ENCODE measurements at regions of chr11 and their contacts with region 1.

Region 1: DNA sequence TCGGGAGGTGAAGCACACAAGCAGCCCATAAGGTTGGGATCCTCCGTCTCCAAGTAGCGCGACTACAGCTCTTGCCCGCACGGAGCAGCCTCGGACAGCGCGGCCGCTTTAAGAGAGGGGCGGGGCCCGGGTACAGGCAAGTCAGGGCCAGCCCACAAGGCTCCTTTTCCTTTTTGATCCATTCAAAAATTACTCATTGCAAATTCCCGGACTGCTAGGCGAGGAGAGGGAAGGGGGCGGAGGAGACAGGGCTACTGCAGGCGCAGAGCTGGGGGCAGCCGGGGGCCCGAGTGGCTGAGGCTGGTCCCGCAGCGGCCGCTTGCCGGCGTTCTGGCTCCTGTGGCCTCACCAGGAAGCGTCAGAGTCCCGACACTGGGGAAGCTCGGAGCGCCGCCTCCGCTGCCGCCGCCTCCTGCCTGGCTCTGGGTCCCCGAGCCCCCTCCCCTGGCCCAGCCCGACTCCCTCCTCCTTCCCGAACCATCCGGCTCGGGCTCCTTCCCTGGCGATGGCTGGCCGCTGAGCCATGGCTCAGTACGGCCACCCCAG is at the start of gene UBASH3B:
- DNase-seq: peak; percentile 77
- ATAC-seq: peak; percentile 74
- H3K4me3 Mint-ChIP-seq: peak within 1 kb of the TSS; percentile 91
- H3K27ac Mint-ChIP-seq: peak within 1 kb of the TSS; percentile 79
- H3K4me1 Mint-ChIP-seq: peaks cover 40% of the 10 kb centered on the region
- H3K27me3 Mint-ChIP-seq: peaks cover 6% of the 10 kb centered on the region
- total RNA-seq, gene UBASH3B: 16.2 to 20.1 TPM

Region 2: DNA sequence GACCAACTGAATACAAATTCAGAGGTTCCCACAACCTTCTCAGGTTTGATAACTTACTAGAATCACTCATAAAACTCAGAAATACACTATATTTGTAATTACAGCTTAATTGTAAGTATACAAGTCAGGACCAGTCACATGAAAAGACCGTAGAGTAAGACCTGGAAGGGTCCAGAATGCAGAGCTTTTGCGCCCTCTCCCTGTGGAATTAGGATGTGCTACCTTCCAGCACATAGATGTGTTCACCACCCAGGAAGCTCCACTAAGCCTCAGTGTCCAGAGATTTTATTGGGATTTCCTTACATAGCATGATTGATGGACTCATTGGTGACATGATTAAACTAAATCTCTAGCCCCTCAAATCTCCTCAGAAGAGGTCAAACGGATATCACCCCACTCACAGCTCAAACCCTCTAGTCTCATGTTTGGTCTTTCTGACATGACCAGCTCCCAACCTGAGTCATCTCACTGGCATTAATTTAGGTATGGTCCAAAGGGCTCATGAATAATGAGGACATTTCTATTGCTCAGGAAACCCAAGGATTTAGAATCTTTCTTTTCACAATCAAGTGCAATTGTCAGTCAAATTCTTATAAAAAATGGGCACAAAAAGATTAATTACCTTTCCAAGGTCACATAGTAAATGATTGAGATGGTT is 77.3 kb before region 1 on chr11:
- CTCF ChIA-PET with region 1: interaction called, 3 read pairs
- POLR2A ChIA-PET with region 1: no interaction called
- intact Hi-C with region 1: loop called in 1 of 2 experiments (anchors 1 kb)
- DNase-seq: peak; percentile 16
- ATAC-seq: no peak
- H3K4me3 Mint-ChIP-seq: no peak overlapping the region
- H3K27ac Mint-ChIP-seq: no peak overlapping the region
- H3K4me1 Mint-ChIP-seq: peaks cover 8% of the 10 kb centered on the region
- H3K27me3 Mint-ChIP-seq: no peaks in the 10 kb centered on the region

Region 3: GRCh38 chr11:122673701-122674100 is 18.1 kb after region 1 on chr11:
- CTCF ChIA-PET with region 1: interaction called, 12 read pairs
- POLR2A ChIA-PET with region 1: interaction called, 8 read pairs
- intact Hi-C with region 1: loop called in 1 of 2 experiments (anchors 2 kb)
- DNase-seq: no peak
- ATAC-seq: no peak
- H3K4me3 Mint-ChIP-seq: no peak overlapping the region
- H3K27ac Mint-ChIP-seq: no peak overlapping the region
- H3K4me1 Mint-ChIP-seq: peaks cover 73% of the 10 kb centered on the region
- H3K27me3 Mint-ChIP-seq: no peaks in the 10 kb centered on the region

Region 4: GRCh38 chr11:122690801-122691548 is 35.4 kb after region 1 on chr11:
- CTCF ChIA-PET with region 1: interaction called, 7 read pairs
- POLR2A ChIA-PET with region 1: interaction called, 5 read pairs
- intact Hi-C with region 1: loop called in 1 of 2 experiments (anchors 1 kb)
- DNase-seq: peak; percentile 35
- ATAC-seq: peak; percentile 16
- H3K4me3 Mint-ChIP-seq: peak overlapping the region; percentile 46
- H3K27ac Mint-ChIP-seq: peak overlapping the region; percentile 80
- H3K4me1 Mint-ChIP-seq: peaks cover 79% of the 10 kb centered on the region
- H3K27me3 Mint-ChIP-seq: no peaks in the 10 kb centered on the region

Region 5: GRCh38 chr11:122697636-122698167 is 42.1 kb after region 1 on chr11:
- CTCF ChIA-PET with region 1: interaction called, 7 read pairs
- POLR2A ChIA-PET with region 1: interaction called, 4 read pairs
- intact Hi-C with region 1: loop called (anchors 1 kb)
- DNase-seq: peak; percentile 61
- ATAC-seq: peak; percentile 79
- H3K4me3 Mint-ChIP-seq: peak overlapping the region; percentile 17
- H3K27ac Mint-ChIP-seq: peak overlapping the region; percentile 82
- H3K4me1 Mint-ChIP-seq: peaks cover 82% of the 10 kb centered on the region
- H3K27me3 Mint-ChIP-seq: no peaks in the 10 kb centered on the region

Region 6: DNA sequence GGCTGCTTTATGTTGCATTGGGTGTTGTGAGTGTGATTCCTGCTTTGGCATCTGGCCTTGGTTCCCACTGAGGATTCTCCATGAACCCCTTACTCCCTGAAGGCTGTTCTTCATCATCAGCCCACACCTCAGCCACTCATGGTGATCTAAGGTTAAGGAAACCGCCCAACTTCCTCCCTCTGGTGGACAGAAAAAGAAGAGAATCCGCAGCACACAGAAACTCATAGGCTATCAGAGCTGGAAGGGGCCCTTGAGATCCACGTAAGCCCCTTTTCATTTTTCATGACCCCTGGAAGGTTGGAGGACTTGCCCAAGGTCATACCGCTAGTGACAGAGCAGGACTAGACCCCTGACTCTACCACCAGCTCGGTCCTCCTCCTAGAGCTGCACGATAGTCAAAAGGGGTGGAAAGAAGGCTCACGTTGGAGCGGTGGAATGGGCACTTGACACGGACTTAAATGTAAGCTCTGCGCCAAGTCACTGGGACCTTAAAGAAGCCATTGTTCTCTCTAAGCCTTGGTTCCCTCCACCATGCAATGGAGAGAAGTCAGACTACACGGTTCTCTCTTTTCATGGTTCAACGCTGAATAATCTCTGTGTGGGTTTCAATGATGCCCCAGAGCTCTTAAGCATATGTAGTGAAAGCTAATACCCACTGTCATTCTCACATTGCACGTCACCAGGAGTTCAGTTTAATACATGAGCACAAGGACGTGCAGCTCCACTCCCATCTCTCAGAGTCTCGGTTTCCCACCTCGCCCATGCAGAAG is 99.1 kb after region 1 on chr11:
- CTCF ChIA-PET with region 1: interaction called, 22 read pairs
- POLR2A ChIA-PET with region 1: no interaction called
- intact Hi-C with region 1: loop called (anchors 2 kb)
- DNase-seq: peak; percentile 52
- ATAC-seq: peak; percentile 47
- H3K4me3 Mint-ChIP-seq: no peak overlapping the region
- H3K27ac Mint-ChIP-seq: no peak overlapping the region
- H3K4me1 Mint-ChIP-seq: peaks cover 60% of the 10 kb centered on the region
- H3K27me3 Mint-ChIP-seq: peaks cover 3% of the 10 kb centered on the region

Region 7: GRCh38 chr11:123741159-123742028 is 1085.8 kb after region 1 on chr11 and contains the start of gene ZNF202:
- CTCF ChIA-PET with region 1: no interaction called
- POLR2A ChIA-PET with region 1: no interaction called
- intact Hi-C with region 1: loop called in 1 of 2 experiments (anchors 2 kb)
- DNase-seq: peak; percentile 96
- ATAC-seq: peak; percentile 96
- H3K4me3 Mint-ChIP-seq: peak within 1 kb of the TSS; percentile 81
- H3K27ac Mint-ChIP-seq: peak within 1 kb of the TSS; percentile 97
- H3K4me1 Mint-ChIP-seq: peaks cover 31% of the 10 kb centered on the region
- H3K27me3 Mint-ChIP-seq: peaks cover 2% of the 10 kb centered on the region
- total RNA-seq, gene ZNF202: 9.5 to 12.1 TPM

Measured in activated CD4-positive, alpha-beta T cell treated with anti-CD3 and anti-CD28 coated beads for 36 hours (primary cell).